ENCODE measurements at regions of chr16 and their contacts with region 1.

Region 1: GRCh38 chr16:11255737-11256660 is at the start of gene SOCS1:
- DNase-seq: peak; percentile 92
- H3K4me3 ChIP-seq: peak within 1 kb of the TSS; percentile 78 to 88 (median 84)
- H3K27ac ChIP-seq: peak within 1 kb of the TSS; percentile 90 to 99 (median 94)
- H3K4me1 ChIP-seq: peaks cover 0 to 46% (median 27%) of the 10 kb centered on the region in 4 donors
- H3K27me3 ChIP-seq: no peaks in the 10 kb centered on the region
- CTCF ChIP-seq: peak; percentile 57 to 96 (median 80)
- EP300 ChIP-seq: no peak
- POLR2A ChIP-seq: peak; percentile 52 to 70
- total RNA-seq, gene SOCS1: 0.66 to 8.8 (median 3.4) TPM

Region 2: GRCh38 chr16:10743610-10744393 is 512.2 kb before region 1 on chr16 and contains the start of gene NUBP1:
- intact Hi-C with region 1: loop called (anchors 10 kb)
- DNase-seq: peak; percentile 100
- H3K4me3 ChIP-seq: peak within 1 kb of the TSS; percentile 49 to 67 (median 60)
- H3K27ac ChIP-seq: peak within 1 kb of the TSS; percentile 94 to 97 (median 96)
- H3K4me1 ChIP-seq: peaks cover 0 to 46% (median 39%) of the 10 kb centered on the region in 4 donors
- H3K27me3 ChIP-seq: no peaks in the 10 kb centered on the region
- CTCF ChIP-seq: no peak
- EP300 ChIP-seq: no peak
- POLR2A ChIP-seq: peak; percentile 39 to 59
- total RNA-seq, gene NUBP1: 26.3 to 32.9 (median 31.4) TPM

Region 3: GRCh38 chr16:10971560-10971961 is 284.4 kb before region 1 on chr16:
- intact Hi-C with region 1: loop called (anchors 1 kb)
- DNase-seq: peak; percentile 76
- H3K4me3 ChIP-seq: no peak overlapping the region
- H3K27ac ChIP-seq: peak overlapping the region in 2 of 4 donors; percentile 29 to 41
- H3K4me1 ChIP-seq: peaks cover 0 to 8% (median 5%) of the 10 kb centered on the region in 4 donors
- H3K27me3 ChIP-seq: no peaks in the 10 kb centered on the region
- CTCF ChIP-seq: peak; percentile 37 to 81 (median 72)
- EP300 ChIP-seq: no peak
- POLR2A ChIP-seq: no peak

Region 4: DNA sequence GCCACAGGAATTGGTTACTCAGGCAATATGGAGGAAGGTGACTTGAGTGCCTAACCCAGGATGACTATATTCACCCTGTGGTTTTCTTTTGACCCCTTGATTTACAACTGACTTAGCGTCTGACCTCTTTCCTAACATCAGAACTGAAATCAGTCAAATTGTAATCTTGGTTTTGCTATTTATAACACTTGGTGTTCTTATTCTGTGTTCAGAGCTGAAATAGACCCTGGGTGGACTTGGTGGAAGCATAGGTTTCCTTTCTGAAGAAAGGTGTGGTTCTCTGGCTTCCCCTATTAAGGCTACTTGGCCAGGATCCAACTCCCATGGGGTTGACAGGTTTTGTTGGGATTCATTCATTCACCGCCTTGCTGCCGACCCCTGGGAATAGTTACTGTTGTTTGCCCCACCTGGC is 230.9 kb before region 1 on chr16:
- intact Hi-C with region 1: no loop called
- DNase-seq: no peak
- H3K4me3 ChIP-seq: no peak overlapping the region
- H3K27ac ChIP-seq: no peak overlapping the region
- H3K4me1 ChIP-seq: peaks cover 0 to 4% (median 0%) of the 10 kb centered on the region in 4 donors
- H3K27me3 ChIP-seq: no peaks in the 10 kb centered on the region
- CTCF ChIP-seq: no peak
- EP300 ChIP-seq: no peak
- POLR2A ChIP-seq: no peak

Region 5: GRCh38 chr16:11076259-11077018 is 179.6 kb before region 1 on chr16:
- intact Hi-C with region 1: loop called (anchors 5 kb)
- DNase-seq: peak; percentile 60
- H3K4me3 ChIP-seq: no peak overlapping the region
- H3K27ac ChIP-seq: peak overlapping the region in 3 of 4 donors; percentile 80 to 87 (median 83)
- H3K4me1 ChIP-seq: peaks cover 0 to 70% (median 66%) of the 10 kb centered on the region in 4 donors
- H3K27me3 ChIP-seq: no peaks in the 10 kb centered on the region
- CTCF ChIP-seq: no peak
- EP300 ChIP-seq: no peak
- POLR2A ChIP-seq: no peak

Region 6: GRCh38 chr16:11133344-11133943 is 122.6 kb before region 1 on chr16:
- intact Hi-C with region 1: loop called (anchors 10 kb)
- DNase-seq: peak; percentile 95
- H3K4me3 ChIP-seq: no peak overlapping the region
- H3K27ac ChIP-seq: peak overlapping the region; percentile 78 to 86 (median 82)
- H3K4me1 ChIP-seq: peaks cover 0 to 68% (median 59%) of the 10 kb centered on the region in 4 donors
- H3K27me3 ChIP-seq: no peaks in the 10 kb centered on the region
- CTCF ChIP-seq: no peak
- EP300 ChIP-seq: peak in 1 of 4 donors; percentile 58
- POLR2A ChIP-seq: no peak

Region 7: DNA sequence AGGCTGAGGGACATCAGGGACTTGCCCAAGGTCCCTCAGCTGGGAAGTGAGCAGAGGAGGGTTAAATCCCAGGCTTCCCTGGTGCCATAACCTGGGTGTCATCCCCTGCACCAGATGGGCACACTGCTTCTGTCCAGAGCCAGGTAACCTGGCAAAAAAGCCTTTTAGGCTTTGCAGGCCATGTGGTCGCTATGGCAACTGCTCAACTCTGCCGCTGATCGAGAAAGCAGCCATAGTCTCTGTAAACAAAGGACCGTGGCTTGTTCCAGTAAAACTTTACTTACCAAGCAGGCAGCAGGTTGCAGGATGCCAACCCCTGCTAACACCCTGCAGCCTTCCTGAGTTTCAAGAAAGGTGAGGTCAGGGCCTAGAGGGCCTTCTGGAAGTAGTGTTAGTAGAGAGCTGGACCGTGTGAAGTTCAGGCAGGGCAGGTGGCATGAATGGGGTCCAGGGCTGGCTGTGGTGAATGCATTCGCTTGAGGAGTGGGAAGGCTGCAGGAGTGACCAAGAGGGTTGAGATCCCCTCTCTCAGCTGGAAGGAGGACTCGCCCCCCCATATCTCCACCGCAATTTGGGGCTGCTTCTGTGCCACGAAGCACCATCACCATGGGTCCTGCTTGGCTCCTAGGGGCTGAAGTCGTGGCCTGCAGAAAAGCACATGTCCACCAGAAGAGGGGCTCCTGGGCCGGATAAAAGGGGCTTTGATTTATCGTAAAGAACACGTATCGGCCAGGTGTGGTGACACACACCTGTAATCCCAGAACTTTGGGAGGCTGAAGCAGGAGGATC is 91.3 kb before region 1 on chr16:
- intact Hi-C with region 1: loop called (anchors 5 kb)
- DNase-seq: no peak
- H3K4me3 ChIP-seq: no peak overlapping the region
- H3K27ac ChIP-seq: peak overlapping the region in 3 of 4 donors; percentile 5 to 75 (median 70)
- H3K4me1 ChIP-seq: peaks cover 0 to 42% (median 39%) of the 10 kb centered on the region in 4 donors
- H3K27me3 ChIP-seq: no peaks in the 10 kb centered on the region
- CTCF ChIP-seq: no peak
- EP300 ChIP-seq: no peak
- POLR2A ChIP-seq: no peak

Region 8: GRCh38 chr16:11345040-11345862 is 89.3 kb after region 1 on chr16 and contains the start of gene RMI2:
- intact Hi-C with region 1: loop called (anchors 2 kb)
- DNase-seq: peak; percentile 98
- H3K4me3 ChIP-seq: peak within 1 kb of the TSS; percentile 31 to 65 (median 58)
- H3K27ac ChIP-seq: peak within 1 kb of the TSS in 2 of 4 donors; percentile 39 to 50
- H3K4me1 ChIP-seq: peaks cover 0 to 30% (median 24%) of the 10 kb centered on the region in 4 donors
- H3K27me3 ChIP-seq: no peaks in the 10 kb centered on the region
- CTCF ChIP-seq: no peak
- EP300 ChIP-seq: no peak
- POLR2A ChIP-seq: no peak
- total RNA-seq, gene RMI2: 0.36 to 2.2 (median 1.2) TPM